H1 (cell line): ENCODE measurements at regions of chr3 and their contacts with region 1.

Region 1: DNA sequence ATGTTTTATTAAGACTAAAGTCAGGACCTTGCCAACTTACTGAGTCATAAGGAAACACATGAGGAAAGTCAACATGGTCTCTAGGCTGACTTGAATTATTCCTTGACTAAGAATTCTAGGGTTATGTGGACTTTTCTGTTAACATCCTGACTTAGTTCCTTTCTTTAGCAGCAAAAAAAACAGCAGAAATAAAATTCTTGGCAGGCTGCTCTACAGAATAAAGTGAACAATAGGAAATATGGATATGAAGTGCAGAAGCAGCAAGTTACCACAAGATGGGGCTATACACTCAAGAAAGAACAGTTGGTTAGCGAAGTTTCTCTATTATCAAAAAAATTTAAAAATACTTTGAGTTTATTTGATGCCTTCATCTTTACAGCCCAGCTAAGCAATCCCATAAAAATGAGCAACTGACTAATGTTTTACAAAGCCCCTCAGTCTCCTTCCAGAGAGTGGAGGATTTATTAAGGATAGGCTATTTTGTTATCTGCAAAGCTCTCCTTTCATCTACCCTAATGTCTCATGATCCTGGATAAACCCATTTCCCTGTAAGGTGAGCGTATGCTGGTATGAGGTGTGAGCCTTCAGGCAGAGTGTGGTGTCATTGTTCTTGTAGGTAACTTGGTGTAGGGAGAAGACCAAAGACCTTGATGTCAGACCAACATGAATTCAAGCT is 23.1 kb upstream of the MCCC1 start:
- DNase-seq: no peak
- H3K4me3 ChIP-seq: no peak overlapping the region
- H3K27ac ChIP-seq: no peak overlapping the region
- H3K4me1 ChIP-seq: no peaks in the 10 kb centered on the region
- H3K27me3 ChIP-seq: peaks cover 0 to 1% (median under 1%) of the 10 kb centered on the region in 4 experiments; a peak in 3 of 7 replicates
- CTCF ChIP-seq: peak in 2 of 3 experiments; percentile 55 to 73; a peak in 2 of 4 replicates
- EP300 ChIP-seq: no peak
- POLR2A ChIP-seq: no peak
- RAD21 ChIP-seq: peak; percentile 84 to 89

Region 2: DNA sequence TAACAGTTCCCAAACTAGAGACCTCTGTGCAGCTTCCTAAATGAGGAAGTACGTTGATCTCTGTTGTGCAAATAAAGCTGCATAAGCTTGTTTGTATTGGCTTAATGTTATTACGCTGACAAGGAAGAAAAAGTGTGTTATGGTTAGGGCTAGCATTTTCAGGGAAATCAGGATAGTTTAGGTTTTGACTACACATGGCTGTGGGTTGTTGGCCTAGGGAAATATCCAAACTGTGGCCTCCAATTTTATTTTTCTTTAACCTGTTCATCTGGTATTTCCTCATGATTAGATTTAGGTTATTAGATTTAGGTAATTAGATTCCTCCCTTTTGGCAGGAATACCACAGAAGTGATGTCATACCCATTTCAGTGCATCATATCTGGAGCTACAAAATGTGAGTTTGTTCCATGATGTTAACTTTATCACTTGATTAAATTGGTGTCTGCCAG is 14.4 kb before region 1 on chr3:
- CTCF ChIA-PET with region 1: no interaction called
- POLR2A ChIA-PET with region 1: no interaction called
- DNase-seq: no peak
- H3K4me3 ChIP-seq: no peak overlapping the region
- H3K27ac ChIP-seq: no peak overlapping the region
- H3K4me1 ChIP-seq: no peaks in the 10 kb centered on the region
- H3K27me3 ChIP-seq: no peaks in the 10 kb centered on the region
- CTCF ChIP-seq: no peak
- EP300 ChIP-seq: no peak
- POLR2A ChIP-seq: no peak
- RAD21 ChIP-seq: no peak

Region 3: DNA sequence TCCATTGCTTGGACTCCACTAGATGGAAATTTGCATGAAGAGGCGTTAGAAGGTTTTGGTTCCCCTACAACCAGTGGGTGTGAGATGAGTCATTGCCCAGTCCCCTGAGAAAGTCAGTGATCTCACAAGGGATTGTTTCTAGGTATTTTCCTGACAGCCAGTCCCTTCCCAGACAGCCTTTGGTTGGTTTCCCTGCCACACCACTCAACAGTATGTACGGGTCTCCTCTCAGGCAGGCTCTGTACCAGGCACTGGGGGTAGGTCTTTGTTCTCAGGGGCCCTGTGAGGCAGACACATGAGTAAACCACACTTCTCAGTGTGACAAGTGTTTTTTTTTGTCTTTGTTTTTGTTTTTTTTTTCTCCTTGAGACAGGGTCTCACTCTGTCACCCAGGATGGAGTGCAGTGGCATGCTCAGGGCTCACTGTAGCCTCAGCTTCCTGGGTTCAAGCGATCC is 36.2 kb after region 1 on chr3:
- CTCF ChIA-PET with region 1: interaction called, 10 read pairs
- POLR2A ChIA-PET with region 1: no interaction called
- DNase-seq: no peak
- H3K4me3 ChIP-seq: no peak overlapping the region
- H3K27ac ChIP-seq: no peak overlapping the region
- H3K4me1 ChIP-seq: peaks cover 0 to 8% (median 2%) of the 10 kb centered on the region in 4 experiments; a peak in 2 of 7 replicates
- H3K27me3 ChIP-seq: peaks cover 3 to 25% (median 20%) of the 10 kb centered on the region in 4 experiments
- CTCF ChIP-seq: no peak
- EP300 ChIP-seq: no peak
- POLR2A ChIP-seq: no peak
- RAD21 ChIP-seq: no peak

Region 4: GRCh38 chr3:183385698-183386613 is 263.6 kb after region 1 on chr3:
- CTCF ChIA-PET with region 1: interaction called, 80 read pairs
- POLR2A ChIA-PET with region 1: interaction called, 3 read pairs
- DNase-seq: peak in 1 of 2 experiments; percentile 72
- H3K4me3 ChIP-seq: no peak overlapping the region
- H3K27ac ChIP-seq: no peak overlapping the region
- H3K4me1 ChIP-seq: peaks cover 0 to 19% (median 4%) of the 10 kb centered on the region in 4 experiments; a peak in 3 of 7 replicates
- H3K27me3 ChIP-seq: no peaks in the 10 kb centered on the region
- CTCF ChIP-seq: peak; percentile 5 to 83 (median 74)
- EP300 ChIP-seq: no peak
- POLR2A ChIP-seq: no peak
- RAD21 ChIP-seq: peak; percentile 81 to 88

Region 5: DNA sequence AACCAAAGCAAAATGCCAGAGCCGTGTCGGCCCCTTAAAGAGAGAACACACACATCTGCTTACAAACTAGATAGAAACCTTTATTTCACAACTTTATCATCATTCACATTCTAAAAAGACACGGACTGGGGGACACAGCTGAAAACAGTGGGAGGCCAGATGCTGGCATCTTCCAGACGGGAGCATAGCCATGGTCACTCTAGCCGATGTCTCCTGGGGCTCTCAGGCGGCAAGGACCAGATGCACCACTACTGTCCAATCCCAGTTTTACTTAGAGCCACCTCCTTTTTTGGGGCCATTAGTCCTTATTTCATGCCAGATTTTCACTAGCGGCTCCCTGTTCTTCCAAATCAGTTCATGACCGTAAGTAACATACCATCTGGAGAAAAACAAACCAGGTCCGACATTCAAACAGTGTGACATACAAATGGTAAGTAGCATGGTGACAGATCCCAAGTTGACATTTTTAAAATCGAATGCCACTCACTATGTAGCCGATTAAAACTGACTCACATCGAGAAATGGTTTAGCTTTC is 707.0 kb after region 1 on chr3:
- CTCF ChIA-PET with region 1: no interaction called
- POLR2A ChIA-PET with region 1: no interaction called
- DNase-seq: no peak
- H3K4me3 ChIP-seq: no peak overlapping the region
- H3K27ac ChIP-seq: no peak overlapping the region
- H3K4me1 ChIP-seq: peaks cover 0 to 4% (median under 1%) of the 10 kb centered on the region in 4 experiments; a peak in 2 of 7 replicates
- H3K27me3 ChIP-seq: no peaks in the 10 kb centered on the region
- CTCF ChIP-seq: no peak
- EP300 ChIP-seq: no peak
- POLR2A ChIP-seq: no peak
- RAD21 ChIP-seq: no peak